ENCODE measurements at regions of chr1 and their contacts with region 1.

Region 1: DNA sequence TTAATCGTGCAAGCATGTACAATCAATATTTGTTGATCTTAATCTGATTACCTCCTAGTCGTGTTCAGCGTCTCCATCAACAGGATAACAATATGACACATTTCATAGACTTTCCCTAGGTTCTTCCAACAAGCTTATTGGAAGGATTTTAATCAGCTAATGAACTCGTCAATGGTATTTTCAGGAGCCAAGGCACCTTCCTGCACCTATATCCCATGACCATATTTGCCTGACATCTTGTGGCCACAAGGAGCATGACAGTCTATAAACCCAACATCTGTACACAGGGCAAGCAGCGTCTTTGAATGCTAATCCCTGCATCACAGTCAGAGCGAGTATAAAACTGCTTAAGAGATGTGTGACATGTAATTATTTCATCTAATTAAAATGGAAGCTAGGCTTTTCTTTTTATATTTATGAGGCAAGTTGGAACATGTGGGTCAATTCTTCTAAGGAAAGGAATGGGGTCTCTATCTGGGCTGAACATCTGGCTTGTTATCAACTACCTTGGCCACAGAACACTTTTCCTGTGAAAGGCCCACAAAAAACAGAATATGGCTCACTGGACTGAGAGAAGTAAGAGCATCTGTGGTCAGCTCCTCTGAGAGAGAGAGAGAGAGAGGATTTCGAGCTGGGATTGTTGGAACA is 388.8 kb downstream of the NTNG1 start:
- DNase-seq: peak in 2 of 4 donors; percentile 36 to 65
- ATAC-seq: peak; percentile 88
- H3K4me3 ChIP-seq: no peak overlapping the region
- H3K27ac ChIP-seq: no peak overlapping the region
- H3K4me1 ChIP-seq: no peaks in the 10 kb centered on the region
- H3K27me3 ChIP-seq: peaks cover 0 to 5% of the 10 kb centered on the region in 2 donors
- CTCF ChIP-seq: peak; percentile 68 to 80

Region 2: DNA sequence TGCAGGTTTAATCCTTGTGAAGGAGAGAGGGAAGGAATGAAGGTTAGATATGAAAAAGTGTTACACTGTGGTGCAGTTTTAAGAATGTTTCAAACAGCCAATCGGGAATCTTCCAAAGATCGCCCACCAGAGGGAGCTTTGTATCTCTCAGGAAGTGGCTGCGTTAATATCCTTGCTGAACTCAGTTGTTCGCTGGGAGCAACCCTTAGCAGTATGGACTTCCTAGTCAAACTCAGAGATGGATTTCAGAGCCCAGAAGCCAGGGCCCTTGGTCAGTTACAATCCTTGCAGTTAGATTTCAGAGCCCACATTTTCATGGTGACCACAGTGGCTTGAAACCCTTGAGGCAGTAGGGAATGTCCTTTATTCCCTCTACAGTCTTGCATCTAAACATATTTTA is 252.6 kb before region 1 on chr1:
- intact Hi-C with region 1: loop called in 1 of 2 experiments (anchors 10 kb)
- DNase-seq: peak in 2 of 4 donors; percentile 13 to 44
- ATAC-seq: peak; percentile 38
- H3K4me3 ChIP-seq: no peak overlapping the region
- H3K27ac ChIP-seq: no peak overlapping the region
- H3K4me1 ChIP-seq: no peaks in the 10 kb centered on the region
- H3K27me3 ChIP-seq: no peaks in the 10 kb centered on the region
- CTCF ChIP-seq: peak; percentile 24 to 32